ENCODE measurements at regions of chr1 and their contacts with region 1.

Region 1: GRCh38 chr1:3899754-3900118 is 336 bp downstream of the C1orf174 start:
- DNase-seq: no peak
- H3K4me3 ChIP-seq: peak overlapping the region; percentile 76 to 88 (median 86)
- H3K27ac ChIP-seq: peak overlapping the region; percentile 93 to 98 (median 94)
- H3K4me1 ChIP-seq: peaks cover 7 to 41% (median 35%) of the 10 kb centered on the region in 4 donors
- H3K27me3 ChIP-seq: no peaks in the 10 kb centered on the region
- CTCF ChIP-seq: no peak
- EP300 ChIP-seq: no peak
- POLR2A ChIP-seq: no peak

Region 2: GRCh38 chr1:3796215-3797061 is 103.3 kb before region 1 on chr1 and contains the start of gene LRRC47:
- intact Hi-C with region 1: loop called (anchors 10 kb)
- DNase-seq: peak; percentile 98
- H3K4me3 ChIP-seq: peak within 1 kb of the TSS; percentile 86 to 99 (median 92)
- H3K27ac ChIP-seq: peak within 1 kb of the TSS; percentile 68 to 91 (median 83)
- H3K4me1 ChIP-seq: peaks cover 34 to 52% (median 43%) of the 10 kb centered on the region in 4 donors
- H3K27me3 ChIP-seq: peaks cover 0 to 14% (median 5%) of the 10 kb centered on the region in 4 donors
- CTCF ChIP-seq: peak in 2 of 3 experiments; percentile 20 to 26
- EP300 ChIP-seq: peak; percentile 0
- POLR2A ChIP-seq: no peak
- total RNA-seq, gene LRRC47: 34.1 to 51.6 (median 44.1) TPM

Region 3: GRCh38 chr1:3856908-3857790 is 42.6 kb before region 1 on chr1 and contains the starts of genes CEP104 and DFFB:
- intact Hi-C with region 1: loop called (anchors 2 kb)
- DNase-seq: peak; percentile 97
- H3K4me3 ChIP-seq: peak within 1 kb of the TSS; percentile 81 to 97 (median 89)
- H3K27ac ChIP-seq: peak within 1 kb of the TSS; percentile 80 to 84 (median 82)
- H3K4me1 ChIP-seq: peaks cover 14 to 34% (median 27%) of the 10 kb centered on the region in 4 donors
- H3K27me3 ChIP-seq: no peaks in the 10 kb centered on the region
- CTCF ChIP-seq: peak in 2 of 3 experiments; percentile 18 to 44
- EP300 ChIP-seq: no peak
- POLR2A ChIP-seq: no peak
- total RNA-seq, gene CEP104: 42.7 to 84.2 (median 69.8) TPM
- total RNA-seq, gene DFFB: 5.0 to 13.4 (median 5.2) TPM

Measured in esophagus muscularis mucosa (tissue), 4 donors.